AG04450 (cell line): ENCODE measurements at regions of chr19 and their contacts with region 1.

Region 1: GRCh38 chr19:44770550-44771257 is 7.0 kb upstream of the CBLC start:
- DNase-seq: peak; percentile 84
- H3K4me3 ChIP-seq: no peak overlapping the region
- H3K27ac ChIP-seq: no peak overlapping the region
- H3K27me3 ChIP-seq: no peaks in the 10 kb centered on the region
- CTCF ChIP-seq: peak; percentile 73

Region 2: DNA sequence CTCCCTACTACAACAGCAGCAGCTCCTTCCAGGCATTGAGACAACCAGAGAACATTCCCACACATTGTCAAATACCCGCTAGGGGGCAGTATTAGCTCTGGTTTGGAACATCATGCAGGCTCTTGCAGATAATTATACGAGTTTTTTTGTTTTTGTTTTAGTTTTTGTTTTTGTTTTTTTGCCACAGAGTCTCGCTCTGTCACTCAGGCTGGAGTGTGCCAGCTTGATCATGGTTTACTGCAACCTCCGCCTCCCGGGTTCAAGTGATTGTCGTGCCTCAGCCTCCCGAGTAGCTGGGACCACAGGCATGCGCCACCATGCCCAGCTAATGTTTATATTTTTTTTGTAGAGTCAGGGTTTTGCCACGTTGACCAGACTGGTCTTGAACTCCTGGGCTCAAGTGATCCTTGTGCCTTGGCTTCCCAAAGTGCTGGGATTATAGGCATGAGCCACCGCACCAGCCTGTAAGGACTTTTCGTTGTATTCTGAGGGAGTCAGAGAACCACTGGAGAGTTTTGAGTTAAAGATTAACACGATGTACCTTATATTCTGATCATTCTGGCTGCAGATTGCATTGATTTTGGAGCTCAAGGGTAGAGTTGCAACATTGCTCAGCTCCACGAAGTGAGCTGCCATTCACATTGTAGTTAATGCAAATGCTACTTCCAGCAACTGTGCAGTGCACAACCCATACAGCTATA is 199.6 kb before region 1 on chr19:
- CTCF ChIA-PET with region 1: interaction called, 19 read pairs
- POLR2A ChIA-PET with region 1: interaction called, 3 read pairs
- DNase-seq: peak; percentile 67
- H3K4me3 ChIP-seq: no peak overlapping the region
- H3K27ac ChIP-seq: no peak overlapping the region
- H3K27me3 ChIP-seq: peaks cover 10% of the 10 kb centered on the region
- CTCF ChIP-seq: peak; percentile 76

Region 3: DNA sequence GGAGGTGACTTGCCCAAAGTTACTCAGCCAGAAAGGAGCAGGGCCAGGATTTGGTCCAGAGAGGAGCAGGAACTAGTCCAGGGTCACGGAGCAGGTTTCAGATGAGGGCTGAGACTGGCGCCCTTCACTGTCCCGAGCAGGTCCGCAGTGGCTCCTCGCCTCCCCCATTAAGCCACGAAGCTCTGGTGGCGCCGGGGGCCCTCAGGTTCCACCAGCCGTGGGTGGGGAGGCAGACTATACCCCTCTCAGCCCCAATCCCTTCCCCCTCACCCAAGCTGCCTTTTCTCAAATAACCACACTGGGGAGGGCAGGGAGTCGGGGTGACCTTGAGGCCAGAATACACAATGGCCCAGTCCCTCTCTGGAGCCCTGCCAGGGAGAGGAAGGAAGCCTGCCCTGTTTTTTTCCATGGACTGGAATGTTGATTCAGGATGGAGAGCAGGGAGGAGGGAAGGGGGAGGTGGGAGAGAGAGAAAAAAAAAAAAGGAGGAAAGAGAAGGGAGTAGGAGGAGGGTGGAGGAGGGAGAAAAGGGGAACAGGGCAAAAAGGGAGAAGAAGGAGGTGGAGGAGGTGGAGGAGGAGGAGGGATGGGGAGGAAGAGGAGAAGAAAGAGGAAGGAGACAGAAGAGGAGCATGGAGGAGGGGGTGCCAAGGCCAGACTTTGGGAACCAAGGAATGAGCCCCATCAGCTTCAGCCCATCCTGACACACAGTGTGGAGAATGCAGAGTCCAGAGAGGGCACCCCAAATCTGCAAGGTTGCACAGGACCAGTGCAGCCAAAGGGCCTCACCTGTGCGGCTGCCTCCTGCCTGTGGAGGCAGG is 52.1 kb before region 1 on chr19:
- CTCF ChIA-PET with region 1: interaction called, 294 read pairs
- POLR2A ChIA-PET with region 1: interaction called, 9 read pairs
- DNase-seq: peak; percentile 7
- H3K4me3 ChIP-seq: no peak overlapping the region
- H3K27ac ChIP-seq: no peak overlapping the region
- H3K27me3 ChIP-seq: no peaks in the 10 kb centered on the region
- CTCF ChIP-seq: no peak

Region 4: DNA sequence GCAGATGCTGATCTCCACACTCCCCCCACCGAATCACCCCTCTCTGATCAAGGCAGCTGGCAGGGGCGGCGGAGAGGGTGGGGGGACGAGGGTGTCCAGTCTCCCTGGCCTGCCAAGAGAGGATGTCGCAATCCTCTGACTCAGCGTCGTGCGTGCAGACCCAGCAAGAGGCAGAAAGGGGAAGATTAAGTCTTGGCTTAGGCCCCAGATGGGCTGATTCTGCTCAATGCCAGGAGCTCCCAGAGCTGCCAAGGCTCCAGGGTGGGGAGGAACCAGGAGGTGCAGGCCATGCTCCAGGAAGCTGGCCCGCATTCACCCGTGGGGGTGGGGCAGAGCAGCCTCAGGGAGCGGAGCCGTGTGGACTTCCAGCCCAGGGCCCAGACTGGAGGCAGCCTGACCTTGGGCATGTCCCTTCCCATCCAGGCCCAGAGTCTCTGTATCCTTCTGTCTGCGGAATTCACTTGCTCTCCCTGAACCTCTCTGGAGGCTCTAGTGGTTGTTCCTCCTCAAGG is 28.8 kb before region 1 on chr19:
- CTCF ChIA-PET with region 1: interaction called, 33 read pairs
- POLR2A ChIA-PET with region 1: interaction called, 4 read pairs
- DNase-seq: peak; percentile 98
- H3K4me3 ChIP-seq: no peak overlapping the region
- H3K27ac ChIP-seq: peak overlapping the region; percentile 87
- H3K27me3 ChIP-seq: no peaks in the 10 kb centered on the region
- CTCF ChIP-seq: no peak

Region 5: GRCh38 chr19:44782729-44783128 is 12.0 kb after region 1 on chr19:
- CTCF ChIA-PET with region 1: interaction called, 37 read pairs
- POLR2A ChIA-PET with region 1: no interaction called
- DNase-seq: no peak
- H3K4me3 ChIP-seq: no peak overlapping the region
- H3K27ac ChIP-seq: no peak overlapping the region
- H3K27me3 ChIP-seq: no peaks in the 10 kb centered on the region
- CTCF ChIP-seq: 0 out of 2 replicates have a peak, but pooled peaks have one; percentile 7

Region 6: GRCh38 chr19:44856421-44857083 is 85.8 kb after region 1 on chr19:
- CTCF ChIA-PET with region 1: no interaction called
- POLR2A ChIA-PET with region 1: no interaction called
- DNase-seq: no peak
- H3K4me3 ChIP-seq: no peak overlapping the region
- H3K27ac ChIP-seq: no peak overlapping the region
- H3K27me3 ChIP-seq: no peaks in the 10 kb centered on the region
- CTCF ChIP-seq: no peak